Psoas muscle (tissue), 8 donors: ENCODE measurements at regions of chr14 and their contacts with region 1.

Region 1: DNA sequence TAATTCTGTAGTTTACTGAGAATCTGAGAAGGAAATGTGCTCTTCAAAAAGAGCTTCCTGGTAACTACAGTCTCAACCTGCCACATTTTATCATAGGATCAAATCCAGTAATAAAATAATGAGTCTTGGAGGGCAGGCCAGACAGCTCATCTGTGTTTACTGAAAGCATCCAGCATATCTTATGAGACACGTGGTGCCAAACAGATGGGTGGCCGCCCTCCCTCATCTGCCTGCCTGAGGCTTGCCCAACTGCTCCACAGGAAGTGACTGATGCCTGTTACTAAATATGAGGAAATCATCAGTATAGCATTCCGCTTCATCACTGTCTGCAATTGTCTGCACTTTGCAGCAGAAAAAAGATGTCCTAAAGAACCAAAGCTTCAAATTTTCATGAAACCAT is 13.5 kb downstream of the DHRS7 start:
- DNase-seq: peak; percentile 88 to 94
- ATAC-seq: peak; percentile 94 to 97 (median 95)
- H3K4me3 ChIP-seq: peak overlapping the region; percentile 35
- H3K27ac ChIP-seq: peak overlapping the region; percentile 93
- H3K4me1 ChIP-seq: peaks cover 51% of the 10 kb centered on the region
- H3K27me3 ChIP-seq: no peaks in the 10 kb centered on the region
- CTCF ChIP-seq: no peak

Region 2: DNA sequence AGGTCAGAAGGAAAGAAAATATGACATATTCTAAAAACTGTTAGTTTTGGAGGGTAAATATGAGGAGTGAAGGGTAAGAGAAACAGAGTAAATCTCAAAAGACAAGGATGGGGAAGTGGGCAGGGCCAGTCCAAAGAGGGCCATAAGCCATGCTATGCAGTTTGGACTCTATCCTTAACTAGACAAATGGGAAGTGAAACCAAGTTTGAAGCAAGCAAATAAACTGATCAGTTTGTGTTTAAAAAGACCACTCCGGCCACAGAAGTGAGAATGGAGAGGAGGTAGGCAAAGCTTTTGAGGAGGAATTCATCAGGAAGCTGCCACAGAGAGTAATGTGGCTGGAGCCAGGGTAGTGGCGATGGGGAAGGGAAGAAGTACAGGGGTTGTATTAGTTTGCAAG is 1000.7 kb before region 1 on chr14:
- intact Hi-C with region 1: no loop called
- DNase-seq: no peak
- ATAC-seq: no peak
- H3K4me3 ChIP-seq: no peak overlapping the region
- H3K27ac ChIP-seq: no peak overlapping the region
- H3K4me1 ChIP-seq: no peaks in the 10 kb centered on the region
- H3K27me3 ChIP-seq: no peaks in the 10 kb centered on the region
- CTCF ChIP-seq: no peak

Region 3: GRCh38 chr14:60106339-60106738 is 45.4 kb before region 1 on chr14:
- intact Hi-C with region 1: loop called in 1 of 2 experiments (anchors 5 kb)
- DNase-seq: no peak
- ATAC-seq: peak; percentile 74 to 88 (median 84)
- H3K4me3 ChIP-seq: no peak overlapping the region
- H3K27ac ChIP-seq: peak overlapping the region; percentile 78
- H3K4me1 ChIP-seq: peaks cover 45% of the 10 kb centered on the region
- H3K27me3 ChIP-seq: no peaks in the 10 kb centered on the region
- CTCF ChIP-seq: no peak

Region 4: DNA sequence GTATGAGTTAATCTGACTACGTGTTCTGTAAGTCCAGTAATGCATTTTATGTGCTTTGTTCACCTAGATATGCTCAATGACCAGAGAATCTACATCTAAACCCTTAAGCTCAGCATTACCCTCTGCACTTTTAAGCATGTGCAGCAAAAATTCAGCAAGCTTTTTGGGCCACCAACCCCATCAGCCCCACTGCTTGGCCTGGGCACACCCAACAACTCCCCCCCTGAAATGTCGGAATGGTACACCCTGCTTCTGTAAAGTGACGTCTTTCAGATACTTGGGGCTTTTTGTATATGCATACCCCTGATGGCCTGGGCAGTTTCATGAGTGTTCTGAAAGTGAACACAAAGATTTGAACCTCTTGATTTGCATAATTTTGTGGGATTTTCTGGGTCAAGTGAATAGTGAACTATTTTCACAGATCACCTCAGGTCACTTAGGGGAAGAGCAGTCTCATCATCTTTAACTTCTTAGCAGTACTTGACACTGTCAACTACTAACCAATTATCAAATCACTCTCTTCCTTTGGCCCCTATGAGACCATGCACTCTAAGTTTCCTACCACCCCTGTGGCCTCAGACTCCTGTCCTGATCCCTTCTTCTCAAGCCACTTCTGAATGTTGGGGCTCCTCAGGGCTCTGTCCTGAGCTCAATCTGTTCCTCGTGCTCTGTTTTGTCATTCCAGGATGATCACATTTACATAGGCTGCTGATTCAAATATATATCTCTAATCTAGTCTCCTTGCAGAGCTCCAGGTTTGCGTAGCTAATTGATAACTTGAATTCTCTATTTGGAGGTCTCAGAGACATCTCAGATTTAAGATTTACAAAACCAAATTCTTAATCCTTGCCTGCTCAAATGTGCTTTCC is 61.0 kb after region 1 on chr14:
- intact Hi-C with region 1: no loop called
- DNase-seq: no peak
- ATAC-seq: no peak
- H3K4me3 ChIP-seq: no peak overlapping the region
- H3K27ac ChIP-seq: no peak overlapping the region
- H3K4me1 ChIP-seq: peaks cover 29% of the 10 kb centered on the region
- H3K27me3 ChIP-seq: no peaks in the 10 kb centered on the region
- CTCF ChIP-seq: no peak